ENCODE measurements at regions of chr1 and their contacts with region 1.

Region 1: GRCh38 chr1:204565617-204566582 is 49.7 kb downstream of the MDM4 start:
- DNase-seq: no peak
- H3K4me3 ChIP-seq: no peak overlapping the region
- H3K27ac ChIP-seq: no peak overlapping the region
- H3K4me1 ChIP-seq: no peaks in the 10 kb centered on the region
- H3K27me3 ChIP-seq: no peaks in the 10 kb centered on the region
- CTCF ChIP-seq: peak; percentile 73

Region 2: DNA sequence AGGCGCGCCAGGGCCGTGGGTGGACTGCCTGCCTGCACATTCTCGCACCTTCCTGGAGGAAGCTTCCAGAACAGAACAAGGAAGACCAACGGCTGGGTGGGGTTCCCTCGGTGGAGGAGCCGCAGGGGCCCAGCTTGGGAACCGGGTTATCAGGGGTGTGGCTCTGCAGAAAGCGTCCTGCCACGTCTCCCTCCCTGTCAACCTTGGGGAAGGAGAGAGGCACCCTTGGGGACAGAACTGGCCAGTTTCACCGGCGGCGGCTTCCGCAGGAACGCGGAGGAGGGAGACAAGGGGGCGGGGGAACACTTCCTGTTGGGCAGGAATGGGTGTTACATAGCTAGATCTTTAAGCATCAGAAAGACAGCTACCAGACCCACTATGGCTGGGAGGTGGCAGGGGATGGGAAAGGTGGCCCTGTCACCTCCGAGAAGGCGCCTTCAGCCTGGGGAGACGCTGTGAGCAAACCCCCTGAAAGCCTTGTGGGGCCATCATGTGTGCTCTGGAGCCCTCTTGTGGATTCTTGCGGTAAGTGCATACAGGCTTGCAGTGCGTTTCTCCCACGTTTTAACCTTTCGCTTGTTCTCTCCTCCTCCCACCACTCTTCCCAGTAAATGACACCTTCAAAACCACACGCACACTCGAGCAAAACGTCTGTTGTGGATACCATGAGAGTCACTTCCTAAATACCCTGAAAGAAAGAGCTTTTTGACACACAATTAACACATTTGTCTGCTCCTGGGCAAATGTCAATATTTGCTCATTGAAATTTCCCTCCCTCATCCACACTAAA is 202.4 kb before region 1 on chr1:
- intact Hi-C with region 1: no loop called
- DNase-seq: peak; percentile 73
- H3K4me3 ChIP-seq: peak overlapping the region; percentile 65
- H3K27ac ChIP-seq: peak overlapping the region; percentile 88
- H3K4me1 ChIP-seq: peaks cover 52% of the 10 kb centered on the region
- H3K27me3 ChIP-seq: peaks cover 3% of the 10 kb centered on the region
- CTCF ChIP-seq: peak; percentile 98

Region 3: GRCh38 chr1:204516180-204516879 is 49.6 kb before region 1 on chr1 and contains the start of gene MDM4:
- intact Hi-C with region 1: no loop called
- DNase-seq: peak; percentile 90
- H3K4me3 ChIP-seq: peak within 1 kb of the TSS; percentile 92
- H3K27ac ChIP-seq: peak within 1 kb of the TSS; percentile 93
- H3K4me1 ChIP-seq: peaks cover 58% of the 10 kb centered on the region
- H3K27me3 ChIP-seq: no peaks in the 10 kb centered on the region
- CTCF ChIP-seq: no peak
- total RNA-seq, gene MDM4: 29.3 TPM

Region 4: GRCh38 chr1:204617256-204618147 is 51.6 kb after region 1 on chr1:
- intact Hi-C with region 1: no loop called
- DNase-seq: no peak
- H3K4me3 ChIP-seq: no peak overlapping the region
- H3K27ac ChIP-seq: no peak overlapping the region
- H3K4me1 ChIP-seq: no peaks in the 10 kb centered on the region
- H3K27me3 ChIP-seq: peaks cover 15% of the 10 kb centered on the region
- CTCF ChIP-seq: no peak

Region 5: GRCh38 chr1:204697893-204698292 is 132.0 kb after region 1 on chr1:
- intact Hi-C with region 1: no loop called
- DNase-seq: no peak
- H3K4me3 ChIP-seq: no peak overlapping the region
- H3K27ac ChIP-seq: no peak overlapping the region
- H3K4me1 ChIP-seq: no peaks in the 10 kb centered on the region
- H3K27me3 ChIP-seq: peaks cover 62% of the 10 kb centered on the region
- CTCF ChIP-seq: no peak

Region 6: DNA sequence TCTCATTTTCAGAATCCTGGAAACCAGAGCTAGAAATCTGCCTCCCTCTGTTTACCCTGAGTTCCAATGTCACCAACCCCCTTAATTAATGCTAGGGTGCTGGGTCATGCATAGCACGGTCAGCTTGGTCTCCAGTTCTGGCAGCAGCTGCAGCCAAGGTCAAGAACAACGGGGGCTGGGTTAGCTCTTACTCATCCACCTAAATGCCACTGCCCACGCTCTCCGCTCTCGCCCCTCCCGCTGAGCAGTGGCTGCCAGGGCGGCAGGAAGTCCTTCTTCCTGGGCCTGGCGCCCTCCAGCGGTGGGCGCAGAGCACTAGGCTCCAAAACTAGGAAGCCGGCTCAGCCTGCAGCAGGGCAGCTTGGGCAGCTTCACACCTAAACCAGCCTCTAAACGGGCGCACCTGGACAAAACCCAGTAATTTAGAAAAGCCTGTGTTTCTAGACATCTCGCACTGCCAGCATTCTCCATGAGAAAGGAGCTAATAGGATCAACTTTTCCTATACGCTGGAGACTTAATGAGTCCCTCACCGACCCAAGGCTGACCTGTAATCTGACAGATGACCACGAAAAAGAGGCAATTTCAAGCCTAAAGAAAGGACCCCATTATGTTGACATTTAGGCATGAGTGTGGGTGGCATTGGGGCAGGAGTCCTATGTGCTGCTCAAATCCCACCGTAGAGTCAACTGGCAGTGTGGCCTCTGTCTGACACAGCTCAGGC is 198.0 kb after region 1 on chr1:
- intact Hi-C with region 1: loop called (anchors 5 kb)
- DNase-seq: peak; percentile 59
- H3K4me3 ChIP-seq: no peak overlapping the region
- H3K27ac ChIP-seq: no peak overlapping the region
- H3K4me1 ChIP-seq: peaks cover 11% of the 10 kb centered on the region
- H3K27me3 ChIP-seq: peaks cover 87% of the 10 kb centered on the region
- CTCF ChIP-seq: peak; percentile 83

Region 7: GRCh38 chr1:204806943-204807687 is 241.2 kb after region 1 on chr1:
- intact Hi-C with region 1: loop called (anchors 5 kb)
- DNase-seq: peak; percentile 77
- H3K4me3 ChIP-seq: peak overlapping the region; percentile 64
- H3K27ac ChIP-seq: no peak overlapping the region
- H3K4me1 ChIP-seq: no peaks in the 10 kb centered on the region
- H3K27me3 ChIP-seq: peaks cover 3% of the 10 kb centered on the region
- CTCF ChIP-seq: peak; percentile 96